ENCODE measurements at regions of chr17 and their contacts with region 1.

Region 1: GRCh38 chr17:42659079-42659931 is at the start of gene TUBG2:
- DNase-seq: peak; percentile 89 to 98
- H3K4me3 ChIP-seq: peak within 1 kb of the TSS; percentile 66 to 84 (median 80)
- H3K27ac ChIP-seq: peak within 1 kb of the TSS; percentile 55; the same call in 1 of the 2 replicates
- H3K4me1 ChIP-seq: peaks cover 3 to 11% (median 6%) of the 10 kb centered on the region in 4 experiments; a peak in 5 of 7 replicates
- H3K27me3 ChIP-seq: no peaks in the 10 kb centered on the region
- CTCF ChIP-seq: no peak
- EP300 ChIP-seq: no peak
- POLR2A ChIP-seq: peak in 1 of 2 experiments; percentile 67; a peak in 1 of 3 replicates
- RAD21 ChIP-seq: no peak
- total RNA-seq, gene TUBG2: 13.0 and 14.8 TPM in 2 replicates

Region 2: DNA sequence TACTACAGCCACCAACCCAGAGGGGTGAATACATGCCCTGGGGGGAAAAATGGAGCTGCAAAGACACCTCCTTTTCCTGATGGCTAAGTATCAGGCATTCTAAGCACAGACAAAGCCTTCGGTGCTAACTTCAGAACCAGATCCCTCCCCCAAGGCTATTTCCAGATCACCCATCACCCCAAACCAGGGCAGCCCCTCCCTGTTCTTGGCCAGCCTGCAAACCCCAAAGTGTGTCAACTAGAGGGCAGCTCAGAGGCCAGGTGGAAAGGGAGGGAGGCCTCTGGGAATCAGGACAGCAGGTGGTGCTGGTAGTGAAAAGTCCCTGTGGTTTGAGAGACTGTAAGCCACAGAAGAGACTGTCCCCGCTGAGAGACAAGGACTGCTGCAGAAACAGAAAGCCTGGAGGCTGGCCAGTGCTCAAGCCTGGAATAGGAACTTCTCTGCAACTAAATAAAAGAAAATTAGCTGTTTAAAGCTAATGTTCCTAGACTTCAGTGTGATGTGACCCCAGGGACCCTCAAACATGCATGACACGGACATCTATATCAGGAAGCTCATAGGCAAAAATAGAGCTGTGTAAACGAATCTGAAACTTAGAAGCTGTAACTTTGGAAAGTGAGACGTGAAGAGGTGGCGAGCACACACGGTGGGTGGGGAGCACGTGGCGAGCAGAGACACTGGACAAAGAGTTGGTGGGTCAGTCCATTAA is 40.7 kb before region 1 on chr17:
- CTCF ChIA-PET with region 1: interaction called, 12 read pairs
- POLR2A ChIA-PET with region 1: interaction called, 6 read pairs
- DNase-seq: peak in 1 of 2 experiments; percentile 77
- H3K4me3 ChIP-seq: no peak overlapping the region
- H3K27ac ChIP-seq: no peak overlapping the region
- H3K4me1 ChIP-seq: peaks cover 0 to 4% (median 4%) of the 10 kb centered on the region in 4 experiments; a peak in 3 of 7 replicates
- H3K27me3 ChIP-seq: no peaks in the 10 kb centered on the region
- CTCF ChIP-seq: peak; percentile 54 to 83 (median 79)
- EP300 ChIP-seq: no peak
- POLR2A ChIP-seq: no peak
- RAD21 ChIP-seq: peak; percentile 60 to 71

Measured in H1 (cell line).